Dorsolateral prefrontal cortex (tissue), 120 donors: ENCODE measurements at regions of chr22 and their contacts with region 1.

Region 1: DNA sequence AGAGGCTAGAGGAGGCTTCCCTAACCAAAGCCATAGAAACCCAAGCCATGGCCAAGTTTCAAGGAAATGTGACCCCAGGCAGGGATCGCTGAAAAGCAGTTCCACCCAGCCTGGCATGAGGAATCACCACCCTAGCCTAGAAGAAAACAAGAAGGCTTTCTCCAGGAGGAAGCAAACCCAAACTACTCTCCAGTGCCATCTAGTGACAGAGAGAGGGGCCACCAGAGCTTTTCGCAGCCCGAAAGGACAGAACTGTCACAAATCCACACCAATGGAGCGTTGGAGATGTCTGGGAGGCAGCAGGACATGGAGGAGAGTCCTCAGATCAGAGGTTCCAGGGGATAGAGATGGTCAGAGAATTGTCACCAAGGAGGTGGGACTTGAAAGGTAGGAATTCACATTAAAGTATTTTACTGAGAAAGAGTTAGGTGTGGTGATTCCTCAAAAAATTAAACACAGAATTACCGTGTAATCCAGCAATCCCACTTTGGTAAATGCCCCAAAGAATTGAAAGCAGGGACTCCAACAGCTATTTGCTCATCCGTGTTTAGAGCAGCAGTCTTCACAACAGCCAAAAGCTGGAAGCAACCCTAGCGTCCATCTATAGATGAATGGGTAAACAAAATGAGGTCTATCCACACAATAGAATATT is 67.3 kb upstream of the NUP50 start:
- DNase-seq: peak in 9 of 10 donors; percentile 29 to 73 (median 64)
- H3K4me3 ChIP-seq: no peak overlapping the region
- H3K27ac ChIP-seq: no peak overlapping the region
- H3K27me3 ChIP-seq: peaks cover 0 to 12% (median 0%) of the 10 kb centered on the region in 45 donors
- CTCF ChIP-seq: peak; percentile 52 to 88 (median 79)

Region 2: GRCh38 chr22:44819971-44820631 is 276.3 kb before region 1 on chr22:
- intact Hi-C with region 1: loop called (anchors 2 to 5 kb)
- DNase-seq: no peak
- H3K4me3 ChIP-seq: no peak overlapping the region
- H3K27ac ChIP-seq: no peak overlapping the region
- H3K27me3 ChIP-seq: peaks cover 0 to 11% (median 0%) of the 10 kb centered on the region in 45 donors
- CTCF ChIP-seq: no peak

Region 3: GRCh38 chr22:44975427-44976262 is 120.7 kb before region 1 on chr22:
- intact Hi-C with region 1: loop called (anchors 5 kb)
- DNase-seq: peak; percentile 9 to 70 (median 58)
- H3K4me3 ChIP-seq: no peak overlapping the region
- H3K27ac ChIP-seq: no peak overlapping the region
- H3K27me3 ChIP-seq: peaks cover 0 to 3% (median 0%) of the 10 kb centered on the region in 45 donors
- CTCF ChIP-seq: peak; percentile 34 to 89 (median 74)

Region 4: GRCh38 chr22:45009881-45010531 is 86.4 kb before region 1 on chr22 and contains the start of gene PHF21B:
- intact Hi-C with region 1: loop called in 1 of 2 experiments (anchors 10 kb)
- DNase-seq: peak in 8 of 10 donors; percentile 18 to 80 (median 71)
- H3K4me3 ChIP-seq: peak within 1 kb of the TSS; percentile 44 to 80 (median 68)
- H3K27ac ChIP-seq: peak within 1 kb of the TSS in 53 of 59 donors; percentile 2 to 91 (median 73)
- H3K27me3 ChIP-seq: peaks cover 0 to 22% (median 0%) of the 10 kb centered on the region in 45 donors
- CTCF ChIP-seq: peak in 2 of 56 donors; percentile 2 to 8
- total RNA-seq, gene PHF21B: 5.0 to 39.2 (median 12.3) TPM